ENCODE measurements at regions of chr18 and their contacts with region 1.

Region 1: GRCh38 chr18:62802523-62802922 is 87.2 kb downstream of the PHLPP1 start:
- DNase-seq: peak; percentile 31 to 57 (median 50)
- H3K4me3 ChIP-seq: no peak overlapping the region
- H3K27ac ChIP-seq: no peak overlapping the region
- H3K4me1 ChIP-seq: peaks cover 2 to 20% (median 9%) of the 10 kb centered on the region in 4 experiments
- H3K27me3 ChIP-seq: no peaks in the 10 kb centered on the region

Region 2: DNA sequence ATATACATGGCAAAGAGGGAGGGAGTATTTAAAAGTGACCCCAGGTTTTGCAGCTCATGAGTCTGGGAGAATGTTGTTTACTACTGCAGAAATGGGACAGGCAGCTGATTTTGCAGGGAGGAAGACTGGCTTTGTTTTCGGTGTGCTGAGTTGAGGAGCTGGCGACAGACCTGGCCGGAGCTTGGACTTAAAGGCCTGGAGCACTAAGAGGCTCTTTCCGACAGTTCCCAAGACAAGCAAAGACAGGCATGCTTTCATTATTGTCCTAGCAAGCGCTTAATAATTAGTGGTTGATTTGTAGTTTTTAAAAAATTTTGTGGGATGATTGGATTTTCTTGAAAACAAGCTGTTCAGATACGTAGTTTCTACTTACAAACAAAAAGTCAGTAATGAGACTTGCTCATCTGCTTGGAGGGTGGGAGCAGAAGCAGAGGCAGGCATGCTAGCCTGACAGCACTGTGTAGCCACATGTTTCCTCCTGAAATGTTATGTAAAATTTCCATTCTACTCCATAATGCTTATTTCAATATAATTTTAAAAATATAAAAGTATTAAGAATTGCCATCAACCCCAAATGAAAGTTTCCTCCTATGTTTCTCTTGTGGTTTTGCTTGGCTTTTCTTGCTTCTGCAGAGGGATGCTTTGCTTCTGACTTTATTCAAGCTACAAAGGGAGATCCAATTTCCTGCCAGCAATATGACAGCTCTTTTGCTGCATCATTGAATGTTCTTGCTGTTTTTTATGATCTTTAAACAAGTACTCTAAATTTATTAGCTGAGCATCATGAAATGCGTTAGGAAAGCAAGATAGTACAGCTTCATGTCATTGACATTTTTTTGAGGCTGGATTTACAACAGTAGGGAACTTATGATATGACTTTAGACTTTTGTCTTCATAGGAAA is 11.4 kb before region 1 on chr18:
- CTCF ChIA-PET with region 1: interaction called, 11 read pairs
- POLR2A ChIA-PET with region 1: no interaction called
- DNase-seq: peak in 2 of 3 donors; percentile 37 to 44
- H3K4me3 ChIP-seq: peak overlapping the region in 1 of 7 experiments; percentile 16
- H3K27ac ChIP-seq: no peak overlapping the region
- H3K4me1 ChIP-seq: peaks cover 0 to 15% (median 9%) of the 10 kb centered on the region in 4 experiments
- H3K27me3 ChIP-seq: no peaks in the 10 kb centered on the region

Measured in common myeloid progenitor, CD34-positive (primary cell).